Gastrocnemius medialis (tissue), 4 donors: ENCODE measurements at regions of chr14 and their contacts with region 1.

Region 1: DNA sequence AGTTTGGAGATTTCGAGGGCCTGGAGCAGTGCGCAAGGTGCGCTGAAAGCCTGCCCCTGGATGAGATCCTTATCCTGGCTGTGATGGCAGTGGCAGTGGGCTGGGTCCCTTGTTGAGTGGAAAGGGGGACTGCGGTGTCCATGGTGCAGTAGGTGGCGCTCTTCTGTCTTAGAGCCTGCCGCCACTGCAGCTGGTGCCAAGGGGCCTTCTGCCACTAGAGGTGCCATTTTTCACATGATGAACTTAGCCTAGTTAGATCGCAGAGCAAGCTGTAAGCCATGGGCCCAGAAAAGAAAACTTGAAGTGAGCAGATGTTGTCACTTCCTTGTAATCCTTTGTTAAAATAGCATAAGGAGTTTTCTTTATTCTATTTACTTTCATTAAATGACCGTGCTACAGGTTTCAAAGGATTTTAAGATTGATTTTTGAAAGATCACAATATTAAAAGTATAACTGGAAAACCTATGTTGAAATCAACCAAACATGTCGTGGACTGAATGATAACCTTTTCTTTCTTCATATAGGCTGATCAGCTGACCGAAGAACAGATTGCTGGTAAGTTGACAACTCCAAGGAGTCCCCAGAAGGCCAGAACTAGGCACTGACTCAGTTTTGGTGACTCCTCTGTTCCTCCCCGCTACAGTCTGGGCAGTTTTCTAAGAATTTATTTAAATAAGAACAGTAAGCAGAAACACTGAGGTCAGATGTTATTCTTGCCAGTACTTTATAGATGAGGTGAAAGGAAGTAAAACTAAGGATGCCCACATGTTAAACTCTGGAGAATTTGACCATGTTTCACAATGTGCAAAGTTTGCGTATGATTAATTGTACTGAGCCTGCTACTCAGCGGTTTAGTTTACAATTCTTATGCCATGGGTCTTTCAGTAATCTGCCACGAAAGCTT is 3.0 kb downstream of the CALM1 start:
- DNase-seq: peak; percentile 92 to 96
- ATAC-seq: peak; percentile 80 to 81
- H3K4me3 ChIP-seq: peak overlapping the region; percentile 82 to 100 (median 98)
- H3K27ac ChIP-seq: peak overlapping the region; percentile 91 to 94 (median 94)
- H3K4me1 ChIP-seq: peaks cover 49 to 64% of the 10 kb centered on the region in 2 donors
- H3K27me3 ChIP-seq: no peaks in the 10 kb centered on the region
- CTCF ChIP-seq: peak; percentile 95 to 100 (median 97)
- POLR2A ChIP-seq: peak in 1 of 2 donors; percentile 14

Region 2: GRCh38 chr14:88562831-88563686 is 1836.7 kb before region 1 on chr14 and contains the start of gene ZC3H14:
- in situ Hi-C with region 1: loop called in 1 of 4 experiments (anchors 25 kb)
- intact Hi-C with region 1: no loop called
- DNase-seq: peak; percentile 54 to 73
- ATAC-seq: peak; percentile 95 to 96
- H3K4me3 ChIP-seq: peak within 1 kb of the TSS; percentile 80 to 95 (median 87)
- H3K27ac ChIP-seq: peak within 1 kb of the TSS; percentile 82 to 89 (median 88)
- H3K4me1 ChIP-seq: peaks cover 14 to 17% of the 10 kb centered on the region in 2 donors
- H3K27me3 ChIP-seq: no peaks in the 10 kb centered on the region
- CTCF ChIP-seq: no peak
- POLR2A ChIP-seq: peak; percentile 69 to 70
- total RNA-seq, gene ZC3H14: 34.0 to 49.5 (median 42.4) TPM

Region 3: DNA sequence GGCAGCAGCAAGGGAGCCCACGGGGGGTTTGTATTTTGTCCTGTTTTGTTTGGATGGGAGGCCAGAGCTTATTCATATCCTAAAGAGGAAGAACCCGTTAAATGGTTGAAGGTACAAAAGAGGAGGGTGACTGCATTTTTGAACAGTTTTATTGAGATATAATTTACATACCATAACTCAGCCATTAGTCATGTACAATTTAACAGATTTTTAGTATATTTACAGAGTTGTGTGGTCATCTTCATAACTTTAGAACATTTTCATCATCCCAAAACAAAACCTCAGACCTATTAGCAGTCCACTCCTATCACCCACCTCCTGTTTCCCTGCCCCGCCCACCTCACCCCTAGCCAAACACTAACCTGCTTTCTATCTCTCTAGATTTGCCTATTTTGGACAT is 80.6 kb before region 1 on chr14:
- in situ Hi-C with region 1: no loop called
- intact Hi-C with region 1: no loop called
- DNase-seq: no peak
- ATAC-seq: no peak
- H3K4me3 ChIP-seq: no peak overlapping the region
- H3K27ac ChIP-seq: no peak overlapping the region
- H3K4me1 ChIP-seq: no peaks in the 10 kb centered on the region
- H3K27me3 ChIP-seq: no peaks in the 10 kb centered on the region
- CTCF ChIP-seq: no peak
- POLR2A ChIP-seq: no peak

Region 4: GRCh38 chr14:90331497-90332435 is 68.0 kb before region 1 on chr14 and contains the start of gene NRDE2:
- in situ Hi-C with region 1: no loop called
- intact Hi-C with region 1: loop called (anchors 5 kb)
- DNase-seq: peak; percentile 98 to 99
- ATAC-seq: peak; percentile 93 to 96
- H3K4me3 ChIP-seq: peak within 1 kb of the TSS; percentile 61 to 90 (median 80)
- H3K27ac ChIP-seq: peak within 1 kb of the TSS; percentile 79 to 93 (median 86)
- H3K4me1 ChIP-seq: peaks cover 9 to 12% of the 10 kb centered on the region in 2 donors
- H3K27me3 ChIP-seq: peaks cover 0 to 4% (median 0%) of the 10 kb centered on the region in 3 donors
- CTCF ChIP-seq: no peak
- POLR2A ChIP-seq: peak; percentile 35 to 58
- total RNA-seq, gene NRDE2: 7.5 to 11.8 (median 10.2) TPM

Region 5: DNA sequence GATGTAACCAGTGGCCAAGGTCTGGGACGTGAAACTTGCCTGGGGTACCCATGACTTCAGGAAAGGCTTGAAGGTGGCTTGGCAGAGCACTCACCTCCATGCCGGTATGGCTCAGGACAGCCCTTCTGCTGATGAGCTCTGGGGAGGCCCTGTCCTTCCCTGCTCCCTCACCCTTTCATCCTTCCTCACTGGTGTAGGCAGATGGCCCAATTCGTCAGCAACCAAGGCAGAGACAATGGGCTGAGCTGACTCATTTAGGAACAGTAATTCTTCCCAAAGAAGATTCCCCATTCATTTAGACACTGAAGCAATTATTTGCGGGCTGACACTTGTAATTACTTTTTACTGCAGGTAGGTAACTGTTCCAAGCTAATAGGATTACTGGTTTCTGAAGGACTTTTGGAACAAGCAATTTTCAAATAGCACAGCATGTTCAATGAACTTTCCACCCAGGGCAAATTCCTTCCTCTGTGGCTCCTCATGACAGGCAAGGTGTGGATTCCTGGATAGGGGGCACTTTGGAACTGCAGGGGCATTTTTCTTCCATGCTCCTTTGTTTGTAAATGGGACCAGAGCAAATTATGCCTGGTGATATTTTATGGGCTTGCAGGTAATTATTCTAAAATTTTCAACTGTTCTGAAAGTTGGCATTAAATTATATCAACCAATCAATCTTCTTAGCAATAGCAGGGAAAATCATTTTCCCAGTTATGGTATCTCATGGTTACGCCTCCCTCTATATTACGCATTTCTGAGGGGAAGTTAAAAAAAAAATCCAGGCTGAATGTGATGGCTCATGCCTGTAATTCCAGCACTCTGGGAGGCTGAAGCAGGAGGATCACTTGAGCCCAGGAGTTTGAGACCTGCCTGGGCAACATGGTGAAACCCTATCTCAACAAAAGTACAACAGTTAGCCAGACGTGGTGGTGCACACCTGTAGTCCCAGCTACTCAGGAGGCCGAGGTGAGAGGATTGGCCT is 44.0 kb before region 1 on chr14:
- in situ Hi-C with region 1: no loop called
- intact Hi-C with region 1: no loop called
- DNase-seq: no peak
- ATAC-seq: no peak
- H3K4me3 ChIP-seq: no peak overlapping the region
- H3K27ac ChIP-seq: no peak overlapping the region
- H3K4me1 ChIP-seq: no peaks in the 10 kb centered on the region
- H3K27me3 ChIP-seq: no peaks in the 10 kb centered on the region
- CTCF ChIP-seq: no peak
- POLR2A ChIP-seq: no peak

Region 6: GRCh38 chr14:90574188-90575131 is 174.7 kb after region 1 on chr14:
- in situ Hi-C with region 1: no loop called
- intact Hi-C with region 1: loop called (anchors 2 kb)
- DNase-seq: peak; percentile 27 to 75
- ATAC-seq: peak; percentile 40 to 43
- H3K4me3 ChIP-seq: no peak overlapping the region
- H3K27ac ChIP-seq: peak overlapping the region; percentile 64 to 72 (median 66)
- H3K4me1 ChIP-seq: peaks cover 48 to 58% of the 10 kb centered on the region in 2 donors
- H3K27me3 ChIP-seq: no peaks in the 10 kb centered on the region
- CTCF ChIP-seq: no peak
- POLR2A ChIP-seq: no peak

Region 7: DNA sequence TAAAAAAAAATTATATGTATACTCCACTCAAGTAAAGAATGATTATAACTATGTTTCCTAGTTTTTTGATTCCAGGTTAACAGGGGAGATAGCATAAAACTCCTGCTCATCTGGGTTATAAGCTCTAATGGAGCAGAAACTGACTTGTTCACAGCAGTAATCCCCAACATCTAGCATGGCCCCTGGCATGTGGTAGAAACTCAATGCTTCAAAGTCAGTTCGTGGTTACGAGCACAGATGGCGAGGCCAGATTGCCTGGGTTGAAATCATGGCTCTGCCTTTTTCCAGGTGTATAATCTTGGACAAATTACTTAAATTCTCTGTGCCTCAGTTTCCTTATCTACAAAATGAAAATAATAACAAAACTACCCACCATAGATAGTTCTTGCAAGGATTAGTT is 232.7 kb after region 1 on chr14:
- in situ Hi-C with region 1: no loop called
- intact Hi-C with region 1: no loop called
- DNase-seq: no peak
- ATAC-seq: no peak
- H3K4me3 ChIP-seq: no peak overlapping the region
- H3K27ac ChIP-seq: no peak overlapping the region
- H3K4me1 ChIP-seq: peaks cover 22 to 38% of the 10 kb centered on the region in 2 donors
- H3K27me3 ChIP-seq: no peaks in the 10 kb centered on the region
- CTCF ChIP-seq: no peak
- POLR2A ChIP-seq: no peak

Region 8: DNA sequence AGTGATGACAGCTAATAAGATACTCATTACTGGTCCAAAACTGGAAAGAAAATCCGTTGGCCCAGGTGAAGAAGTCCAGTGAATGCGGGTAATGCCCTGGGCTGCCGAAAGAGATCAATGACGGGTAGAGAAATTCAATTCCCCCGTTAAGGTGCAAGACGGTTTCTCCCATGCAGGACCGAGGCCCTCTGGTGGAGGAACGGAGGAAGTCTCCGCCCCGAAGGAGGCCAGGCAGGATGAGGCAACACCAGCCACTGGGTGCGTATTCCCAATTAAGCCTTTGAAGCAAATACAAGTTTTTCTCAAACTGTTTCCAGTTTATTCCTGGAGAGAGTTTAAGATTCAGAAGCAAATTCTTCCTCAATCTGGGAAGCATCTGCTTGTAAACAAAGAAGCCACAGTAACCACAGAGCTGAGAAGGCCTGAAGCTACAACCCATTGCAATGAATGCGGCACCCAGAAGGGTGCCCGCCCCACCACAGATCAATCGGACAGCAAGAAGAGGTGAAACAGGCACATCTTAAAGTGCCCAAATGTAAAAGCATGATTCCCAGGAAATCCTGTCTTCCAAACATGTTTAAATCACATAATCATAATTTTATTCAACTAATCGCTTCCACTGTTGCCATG is 297.9 kb after region 1 on chr14:
- in situ Hi-C with region 1: loop called (anchors 5 to 10 kb)
- intact Hi-C with region 1: loop called (anchors 1 kb)
- DNase-seq: peak; percentile 84 to 88
- ATAC-seq: peak; percentile 56 to 61
- H3K4me3 ChIP-seq: peak overlapping the region in 1 of 4 donors; percentile 0
- H3K27ac ChIP-seq: peak overlapping the region; percentile 87 to 93 (median 88)
- H3K4me1 ChIP-seq: peaks cover 69 to 71% of the 10 kb centered on the region in 2 donors
- H3K27me3 ChIP-seq: no peaks in the 10 kb centered on the region
- CTCF ChIP-seq: peak; percentile 96 to 98 (median 96)
- POLR2A ChIP-seq: no peak

Region 9: DNA sequence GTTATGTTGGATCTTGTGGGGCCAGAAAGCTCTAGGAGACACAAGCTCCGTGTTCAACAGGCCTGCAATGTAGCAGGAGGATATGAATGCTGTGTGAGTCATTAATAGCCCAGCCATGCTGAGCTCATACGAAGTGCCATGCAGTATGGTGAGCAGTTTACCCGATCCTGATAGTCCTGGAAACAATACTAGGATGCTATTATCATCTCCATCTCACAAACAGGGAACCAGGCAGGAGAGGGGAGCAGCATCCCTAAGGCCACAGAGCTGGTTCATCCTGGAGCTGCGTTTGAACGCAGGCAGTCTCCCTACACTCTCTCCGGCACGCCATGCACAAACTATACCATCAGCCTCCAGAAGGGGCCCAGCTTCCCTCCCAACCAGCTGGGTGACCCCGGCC is 396.0 kb after region 1 on chr14:
- in situ Hi-C with region 1: no loop called
- intact Hi-C with region 1: no loop called
- DNase-seq: no peak
- ATAC-seq: peak in 1 of 2 donors; percentile 12
- H3K4me3 ChIP-seq: no peak overlapping the region
- H3K27ac ChIP-seq: no peak overlapping the region
- H3K4me1 ChIP-seq: peaks cover 0 to 3% of the 10 kb centered on the region in 2 donors
- H3K27me3 ChIP-seq: no peaks in the 10 kb centered on the region
- CTCF ChIP-seq: no peak
- POLR2A ChIP-seq: no peak

Region 10: GRCh38 chr14:91060351-91061055 is 660.7 kb after region 1 on chr14 and contains the start of gene RPS6KA5:
- in situ Hi-C with region 1: loop called in 1 of 4 experiments (anchors 25 kb)
- intact Hi-C with region 1: no loop called
- DNase-seq: peak; percentile 100
- ATAC-seq: peak; percentile 94 to 95
- H3K4me3 ChIP-seq: peak within 1 kb of the TSS; percentile 73 to 94 (median 87)
- H3K27ac ChIP-seq: peak within 1 kb of the TSS; percentile 96 to 98 (median 96)
- H3K4me1 ChIP-seq: peaks cover 24 to 28% of the 10 kb centered on the region in 2 donors
- H3K27me3 ChIP-seq: no peaks in the 10 kb centered on the region
- CTCF ChIP-seq: peak; percentile 27 to 79 (median 48)
- POLR2A ChIP-seq: peak; percentile 91 to 97
- total RNA-seq, gene RPS6KA5: 5.8 to 18.4 (median 9.8) TPM